Natural killer cell (primary cell): ENCODE measurements at regions of chr10 and their contacts with region 1.

Region 1: GRCh38 chr10:108544494-108545120 is 1378.7 kb downstream of the XPNPEP1 start:
- DNase-seq: peak; percentile 5 to 33
- ATAC-seq: peak in 1 of 3 donors; percentile 41
- H3K4me3 ChIP-seq: no peak overlapping the region
- H3K4me3 Mint-ChIP-seq: no peak overlapping the region
- H3K27ac ChIP-seq: no peak overlapping the region
- H3K27ac Mint-ChIP-seq: no peak overlapping the region
- H3K4me1 ChIP-seq: no peaks in the 10 kb centered on the region
- H3K4me1 Mint-ChIP-seq: no peaks in the 10 kb centered on the region
- H3K27me3 ChIP-seq: no peaks in the 10 kb centered on the region
- H3K27me3 Mint-ChIP-seq: no peaks in the 10 kb centered on the region
- CTCF ChIP-seq: peak; percentile 66

Region 2: DNA sequence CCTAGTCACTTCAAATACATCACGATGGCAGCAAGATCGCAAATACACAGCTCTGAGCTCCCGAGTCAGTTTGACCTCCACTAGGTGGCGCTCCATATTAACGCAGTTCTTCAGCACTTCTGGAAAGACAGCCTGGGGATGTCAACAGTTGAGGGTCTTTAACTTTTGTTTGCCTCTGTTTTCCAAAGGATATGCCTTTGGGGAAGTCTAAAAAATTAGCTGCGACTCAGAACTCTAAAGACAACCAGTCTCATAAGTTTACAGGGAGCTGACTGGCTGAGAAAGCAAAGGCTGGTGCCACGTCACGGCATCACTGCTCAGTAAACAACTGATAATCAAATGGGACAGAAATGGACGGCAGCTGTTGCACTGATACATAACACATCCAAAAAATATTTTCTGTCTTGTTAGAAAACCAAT is 1838.9 kb before region 1 on chr10:
- intact Hi-C with region 1: loop called (anchors 5 kb)
- DNase-seq: peak; percentile 19 to 31
- ATAC-seq: peak in 1 of 3 donors; percentile 60
- H3K4me3 ChIP-seq: no peak overlapping the region
- H3K4me3 Mint-ChIP-seq: no peak overlapping the region
- H3K27ac ChIP-seq: no peak overlapping the region
- H3K27ac Mint-ChIP-seq: no peak overlapping the region
- H3K4me1 ChIP-seq: no peaks in the 10 kb centered on the region
- H3K4me1 Mint-ChIP-seq: peaks cover 0 to 8% of the 10 kb centered on the region in 2 donors
- H3K27me3 ChIP-seq: no peaks in the 10 kb centered on the region
- H3K27me3 Mint-ChIP-seq: peaks cover 2 to 26% of the 10 kb centered on the region in 2 donors
- CTCF ChIP-seq: peak; percentile 69

Region 3: DNA sequence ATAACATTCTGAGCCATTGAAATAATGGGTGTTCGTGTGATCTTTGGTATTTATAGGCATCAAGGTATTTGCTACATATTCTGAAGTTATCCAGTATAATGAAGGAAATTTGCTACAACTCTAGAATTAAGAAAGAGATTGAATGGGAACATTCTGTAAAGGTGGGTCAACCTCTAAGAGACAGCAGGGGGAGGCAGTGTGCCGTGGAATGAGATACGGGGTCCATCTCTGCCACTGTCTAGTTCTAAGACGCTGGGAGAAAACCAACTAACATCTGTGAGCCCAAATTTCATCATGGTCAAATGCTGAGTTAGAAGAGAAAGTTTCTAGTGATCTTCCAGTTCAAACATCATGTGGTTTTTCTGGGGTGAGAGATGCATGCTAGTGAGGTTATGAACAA is 1749.0 kb before region 1 on chr10:
- intact Hi-C with region 1: loop called (anchors 2 kb)
- DNase-seq: peak; percentile 4 to 29
- ATAC-seq: peak; percentile 68 to 94 (median 78)
- H3K4me3 ChIP-seq: no peak overlapping the region
- H3K4me3 Mint-ChIP-seq: no peak overlapping the region
- H3K27ac ChIP-seq: no peak overlapping the region
- H3K27ac Mint-ChIP-seq: no peak overlapping the region
- H3K4me1 ChIP-seq: no peaks in the 10 kb centered on the region
- H3K4me1 Mint-ChIP-seq: peaks cover 32 to 33% of the 10 kb centered on the region in 2 donors
- H3K27me3 ChIP-seq: no peaks in the 10 kb centered on the region
- H3K27me3 Mint-ChIP-seq: no peaks in the 10 kb centered on the region
- CTCF ChIP-seq: peak; percentile 71

Region 4: GRCh38 chr10:108421266-108421665 is 123.3 kb before region 1 on chr10:
- intact Hi-C with region 1: no loop called
- DNase-seq: no peak
- ATAC-seq: no peak
- H3K4me3 ChIP-seq: no peak overlapping the region
- H3K4me3 Mint-ChIP-seq: no peak overlapping the region
- H3K27ac ChIP-seq: no peak overlapping the region
- H3K27ac Mint-ChIP-seq: no peak overlapping the region
- H3K4me1 ChIP-seq: no peaks in the 10 kb centered on the region
- H3K4me1 Mint-ChIP-seq: no peaks in the 10 kb centered on the region
- H3K27me3 ChIP-seq: no peaks in the 10 kb centered on the region
- H3K27me3 Mint-ChIP-seq: no peaks in the 10 kb centered on the region
- CTCF ChIP-seq: no peak

Region 5: GRCh38 chr10:108789919-108790318 is 245.3 kb after region 1 on chr10:
- intact Hi-C with region 1: no loop called
- DNase-seq: no peak
- ATAC-seq: no peak
- H3K4me3 ChIP-seq: no peak overlapping the region
- H3K4me3 Mint-ChIP-seq: no peak overlapping the region
- H3K27ac ChIP-seq: no peak overlapping the region
- H3K27ac Mint-ChIP-seq: no peak overlapping the region
- H3K4me1 ChIP-seq: no peaks in the 10 kb centered on the region
- H3K4me1 Mint-ChIP-seq: no peaks in the 10 kb centered on the region
- H3K27me3 ChIP-seq: no peaks in the 10 kb centered on the region
- H3K27me3 Mint-ChIP-seq: no peaks in the 10 kb centered on the region
- CTCF ChIP-seq: no peak